H1 (cell line): ENCODE measurements at regions of chr4 and their contacts with region 1.

Region 1: GRCh38 chr4:3857269-3857926 is 91.2 kb downstream of the ADRA2C start:
- DNase-seq: no peak
- H3K4me3 ChIP-seq: no peak overlapping the region
- H3K27ac ChIP-seq: no peak overlapping the region
- H3K4me1 ChIP-seq: peaks cover 0 to 13% (median 8%) of the 10 kb centered on the region in 4 experiments; a peak in 5 of 7 replicates
- H3K27me3 ChIP-seq: no peaks in the 10 kb centered on the region; a peak in 1 of 7 replicates
- CTCF ChIP-seq: no peak
- EP300 ChIP-seq: no peak
- POLR2A ChIP-seq: no peak
- RAD21 ChIP-seq: no peak

Region 2: DNA sequence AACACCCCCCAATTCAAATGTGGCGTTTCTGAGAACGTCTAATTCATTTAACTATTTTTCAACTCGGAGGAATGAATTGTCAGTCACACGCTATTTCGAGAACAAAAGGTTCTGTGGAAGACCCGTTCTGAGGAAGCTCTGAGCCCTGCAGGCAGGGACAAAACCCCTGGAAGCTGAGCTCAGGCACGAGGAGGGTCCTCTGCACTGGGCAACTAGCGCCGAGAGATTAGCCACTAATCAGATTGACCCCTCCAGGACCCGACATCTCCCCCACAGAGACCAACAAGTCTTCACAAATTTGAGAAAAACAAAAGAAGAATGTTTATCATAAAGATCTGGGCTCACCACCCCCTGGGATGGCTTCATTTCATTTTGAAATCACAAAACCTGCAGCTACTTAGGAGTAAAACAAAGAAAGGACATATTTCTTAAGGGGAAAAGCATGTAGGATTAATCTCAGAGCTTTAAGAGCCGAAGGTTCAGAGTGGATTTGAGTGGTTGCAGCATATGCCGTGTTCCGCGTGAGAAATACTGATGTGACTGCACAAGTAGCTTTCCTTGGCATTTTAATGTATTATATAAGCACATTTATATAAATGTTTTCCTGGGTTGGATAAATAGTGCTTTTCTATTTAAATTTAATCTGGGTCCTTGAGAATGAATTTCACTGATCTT is 49.4 kb before region 1 on chr4:
- CTCF ChIA-PET with region 1: no interaction called
- POLR2A ChIA-PET with region 1: no interaction called
- DNase-seq: no peak
- H3K4me3 ChIP-seq: peak overlapping the region in 2 of 4 experiments; percentile 2 to 18; a peak in 2 of 8 replicates
- H3K27ac ChIP-seq: no peak overlapping the region
- H3K4me1 ChIP-seq: peaks cover 0 to 7% (median 5%) of the 10 kb centered on the region in 4 experiments; a peak in 6 of 7 replicates
- H3K27me3 ChIP-seq: peaks cover 0 to 3% (median 1%) of the 10 kb centered on the region in 4 experiments; a peak in 1 of 7 replicates
- CTCF ChIP-seq: no peak
- EP300 ChIP-seq: no peak
- POLR2A ChIP-seq: no peak
- RAD21 ChIP-seq: no peak

Region 3: GRCh38 chr4:3836756-3837601 is 20.4 kb before region 1 on chr4:
- CTCF ChIA-PET with region 1: interaction called, 15 read pairs
- POLR2A ChIA-PET with region 1: interaction called, 3 read pairs
- DNase-seq: peak in 1 of 2 experiments; percentile 80
- H3K4me3 ChIP-seq: no peak overlapping the region
- H3K27ac ChIP-seq: no peak overlapping the region
- H3K4me1 ChIP-seq: peaks cover 0 to 28% (median 18%) of the 10 kb centered on the region in 4 experiments; a peak in 6 of 7 replicates
- H3K27me3 ChIP-seq: peaks cover 0 to 3% (median 0%) of the 10 kb centered on the region in 4 experiments; a peak in 2 of 7 replicates
- CTCF ChIP-seq: no peak
- EP300 ChIP-seq: no peak
- POLR2A ChIP-seq: no peak
- RAD21 ChIP-seq: no peak

Region 4: DNA sequence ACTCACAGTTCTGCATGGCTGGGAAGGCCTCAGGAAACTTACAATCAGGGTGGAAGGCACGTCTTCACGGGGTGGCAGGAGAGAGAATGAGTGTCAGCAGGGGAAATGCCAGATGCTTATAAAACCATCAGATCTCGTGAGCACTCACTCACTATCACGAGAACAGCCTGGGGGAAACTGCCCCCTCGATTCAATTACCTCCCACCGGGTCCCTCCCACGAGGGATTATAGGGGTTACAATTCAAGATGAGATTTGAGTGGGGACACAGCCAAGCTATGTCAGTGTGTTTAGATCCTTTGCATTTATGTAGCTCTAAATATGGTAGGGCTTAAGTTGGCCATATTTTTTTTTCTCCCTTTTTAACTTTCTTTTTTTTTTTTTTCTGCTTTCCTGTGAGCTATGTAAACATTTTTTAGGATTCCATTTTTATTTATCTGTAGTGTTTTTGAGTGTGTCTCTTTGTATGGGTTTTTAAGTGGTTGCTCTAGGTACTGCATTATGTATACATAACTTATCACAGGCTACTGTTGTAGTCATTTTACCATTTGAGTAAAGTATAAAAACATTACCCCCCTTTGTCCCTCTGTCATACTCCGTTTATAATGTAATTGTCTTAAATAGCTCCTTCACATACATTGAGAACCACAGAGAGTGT is 12.2 kb before region 1 on chr4:
- CTCF ChIA-PET with region 1: interaction called, 20 read pairs
- POLR2A ChIA-PET with region 1: interaction called, 3 read pairs
- DNase-seq: no peak
- H3K4me3 ChIP-seq: no peak overlapping the region
- H3K27ac ChIP-seq: no peak overlapping the region
- H3K4me1 ChIP-seq: peaks cover 0 to 2% (median 0%) of the 10 kb centered on the region in 4 experiments; a peak in 3 of 7 replicates
- H3K27me3 ChIP-seq: no peaks in the 10 kb centered on the region; a peak in 2 of 7 replicates
- CTCF ChIP-seq: no peak
- EP300 ChIP-seq: no peak
- POLR2A ChIP-seq: no peak
- RAD21 ChIP-seq: no peak